G401 (cell line): ENCODE measurements at regions of chr7 and their contacts with region 1.

Region 1: GRCh38 chr7:27129729-27130539 is 623 bp downstream of the HOXA4 start:
- DNase-seq: no peak

Region 2: DNA sequence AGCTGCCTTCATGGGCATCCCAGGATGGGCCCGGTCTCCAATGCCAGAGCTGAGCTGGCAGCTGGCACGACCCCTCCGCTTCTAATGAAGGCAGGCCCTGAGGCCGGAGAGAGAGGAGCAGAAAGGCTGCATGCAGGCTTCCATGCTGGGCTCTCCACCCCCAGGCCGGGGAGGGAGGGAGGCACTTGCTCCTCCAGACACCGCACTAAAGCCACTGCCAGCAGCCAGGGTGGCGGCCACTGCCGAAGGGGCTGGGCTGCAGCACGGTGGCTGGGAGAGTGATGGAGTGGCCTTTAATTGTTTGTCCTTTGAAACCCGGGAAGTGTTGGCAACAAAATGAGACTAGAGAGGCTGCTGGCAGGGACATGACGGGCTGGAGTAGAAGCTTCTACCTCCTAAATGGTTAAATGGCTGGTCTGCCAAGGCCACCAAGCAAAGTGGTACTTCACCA is 502.0 kb before region 1 on chr7:
- in situ Hi-C with region 1: no loop called
- DNase-seq: peak; percentile 66

Region 3: GRCh38 chr7:26989897-26990670 is 139.8 kb before region 1 on chr7:
- in situ Hi-C with region 1: no loop called
- DNase-seq: no peak

Region 4: DNA sequence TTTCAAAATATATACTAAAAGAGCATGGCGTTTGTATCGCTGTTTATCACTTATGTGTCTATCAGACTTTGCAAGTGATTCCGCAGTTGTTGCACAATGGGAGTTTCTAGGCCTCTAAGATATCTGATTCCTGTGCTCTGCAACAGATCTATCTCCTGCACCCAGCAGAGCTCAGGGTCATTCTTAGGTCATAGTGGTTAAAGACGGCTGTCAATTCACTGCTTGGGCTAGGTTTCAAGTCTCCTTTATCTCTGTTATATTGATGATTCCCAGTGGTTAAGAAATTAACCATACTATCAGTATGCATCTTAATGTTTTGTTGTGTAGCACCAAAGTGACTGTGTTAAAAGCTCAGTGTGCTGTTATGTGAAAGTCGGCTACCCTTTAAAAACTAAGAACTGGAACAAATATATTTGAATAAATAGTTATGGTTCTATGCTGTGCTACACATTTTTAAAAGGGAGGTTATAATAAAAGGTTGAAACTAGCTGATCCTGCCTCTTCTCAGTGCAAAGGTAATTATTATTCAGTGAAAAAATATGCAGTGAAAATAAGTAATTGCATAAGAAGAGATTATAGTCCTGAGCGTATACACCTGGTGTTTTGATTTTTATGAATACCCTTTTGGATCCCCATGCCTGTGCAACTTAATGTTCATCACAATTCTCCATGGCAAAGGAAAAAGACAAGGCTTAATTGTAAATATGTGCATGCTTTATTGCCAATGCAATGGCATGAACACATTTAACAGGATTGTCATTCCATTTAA is 58.1 kb before region 1 on chr7:
- in situ Hi-C with region 1: no loop called
- DNase-seq: no peak

Region 5: DNA sequence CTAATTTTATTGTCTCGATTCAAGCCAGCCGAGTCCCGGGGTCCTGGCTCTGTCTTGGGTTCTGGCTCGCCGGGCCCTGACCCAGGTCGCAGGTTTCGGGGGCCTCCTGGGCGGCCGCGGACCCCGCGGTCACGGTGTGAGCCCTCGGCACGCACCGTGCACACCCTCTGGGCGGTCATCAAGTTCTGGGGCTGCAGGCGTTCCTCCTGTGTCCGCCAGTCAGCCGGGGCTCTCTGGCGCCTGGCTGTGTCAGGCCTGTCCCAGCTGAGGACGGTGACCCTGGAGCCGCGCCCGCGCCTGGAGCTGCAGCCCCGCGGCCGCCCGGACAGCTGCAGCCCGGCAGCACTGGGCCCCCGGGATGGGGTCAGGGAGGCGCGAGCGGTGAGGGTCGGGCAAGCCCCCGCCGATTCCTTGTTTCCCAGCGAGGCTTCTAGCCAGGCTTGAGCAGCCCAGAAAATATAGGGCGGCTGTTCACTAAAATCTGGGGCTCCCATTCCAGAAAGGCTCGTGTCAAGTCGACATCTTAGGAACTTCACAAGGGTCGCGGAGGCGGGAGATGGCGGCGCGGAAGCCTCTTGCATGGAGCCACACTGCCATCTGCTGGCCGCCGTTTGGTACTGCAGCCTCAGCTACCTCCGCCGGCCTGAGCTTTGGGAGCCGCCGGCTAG is 30.7 kb after region 1 on chr7:
- in situ Hi-C with region 1: loop called (anchors 5 kb)
- DNase-seq: peak; percentile 79